Caco-2 (cell line): ENCODE measurements at regions of chr19 and their contacts with region 1.

Region 1: DNA sequence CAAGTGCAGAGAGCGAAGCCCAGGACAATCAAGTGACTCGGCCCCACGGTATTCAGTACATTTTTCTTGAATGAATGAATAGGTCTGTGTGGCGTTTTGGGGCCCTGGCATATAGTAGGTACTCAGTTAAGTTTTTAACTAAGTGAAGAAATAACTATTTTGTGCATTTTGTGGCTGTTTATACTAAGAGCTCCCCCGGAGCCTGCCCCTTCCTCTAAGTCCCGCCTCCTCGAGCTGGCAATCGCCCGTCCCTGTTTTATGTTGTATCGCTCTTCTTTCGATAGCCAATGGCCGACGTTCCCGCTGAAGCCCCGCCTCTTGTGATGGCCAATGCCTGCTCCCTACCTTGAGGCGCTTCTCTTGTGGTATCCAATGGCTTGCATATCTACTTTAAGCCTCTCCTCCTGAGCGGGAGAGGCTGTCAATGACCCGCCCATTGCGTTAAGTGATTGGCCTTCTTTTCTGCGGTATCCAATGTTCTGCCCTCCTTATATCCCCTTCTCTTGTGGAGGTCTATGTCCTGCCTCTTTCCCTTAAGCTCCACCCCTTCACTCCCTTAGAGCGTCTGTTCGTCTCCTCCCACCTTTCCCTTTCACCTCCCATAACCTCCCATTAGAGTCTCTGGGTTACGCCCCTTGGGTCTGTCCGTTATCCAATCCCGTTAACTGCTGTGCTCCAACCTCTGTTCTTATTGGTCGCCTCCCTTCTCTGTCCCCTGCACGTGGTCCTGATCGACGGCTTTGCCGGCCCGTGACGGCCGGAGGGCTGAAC is 509 bp upstream of the HDGFL2 start:
- DNase-seq: peak; percentile 97 to 99
- H3K4me3 ChIP-seq: peak overlapping the region; percentile 53
- H3K4me3 Mint-ChIP-seq: no peak overlapping the region
- H3K27ac Mint-ChIP-seq: no peak overlapping the region
- H3K4me1 ChIP-seq: peaks cover 4% of the 10 kb centered on the region; the same call in 1 of the 2 replicates
- H3K4me1 Mint-ChIP-seq: peaks cover 6% of the 10 kb centered on the region
- H3K27me3 ChIP-seq: no peaks in the 10 kb centered on the region
- H3K27me3 Mint-ChIP-seq: no peaks in the 10 kb centered on the region
- CTCF ChIP-seq: no peak

Region 2: GRCh38 chr19:4360641-4361151 is 110.9 kb before region 1 on chr19:
- CTCF ChIA-PET with region 1: no interaction called
- POLR2A ChIA-PET with region 1: no interaction called
- intact Hi-C with region 1: no loop called
- DNase-seq: no peak
- H3K4me3 ChIP-seq: no peak overlapping the region
- H3K4me3 Mint-ChIP-seq: no peak overlapping the region
- H3K27ac Mint-ChIP-seq: peak overlapping the region; percentile 42
- H3K4me1 ChIP-seq: 0 out of 2 replicates have a peak, but pooled peaks cover 4% of the 10 kb centered on the region
- H3K4me1 Mint-ChIP-seq: no peaks in the 10 kb centered on the region
- H3K27me3 ChIP-seq: no peaks in the 10 kb centered on the region
- H3K27me3 Mint-ChIP-seq: no peaks in the 10 kb centered on the region
- CTCF ChIP-seq: no peak

Region 3: GRCh38 chr19:4431808-4432674 is 39.5 kb before region 1 on chr19:
- CTCF ChIA-PET with region 1: no interaction called
- POLR2A ChIA-PET with region 1: no interaction called
- intact Hi-C with region 1: no loop called
- DNase-seq: no peak
- H3K4me3 ChIP-seq: no peak overlapping the region
- H3K4me3 Mint-ChIP-seq: no peak overlapping the region
- H3K27ac Mint-ChIP-seq: no peak overlapping the region
- H3K4me1 ChIP-seq: no peaks in the 10 kb centered on the region
- H3K4me1 Mint-ChIP-seq: no peaks in the 10 kb centered on the region
- H3K27me3 ChIP-seq: no peaks in the 10 kb centered on the region
- H3K27me3 Mint-ChIP-seq: no peaks in the 10 kb centered on the region
- CTCF ChIP-seq: no peak

Region 4: GRCh38 chr19:4457654-4458395 is 13.8 kb before region 1 on chr19 and contains the start of gene UBXN6:
- CTCF ChIA-PET with region 1: interaction called, 4 read pairs
- POLR2A ChIA-PET with region 1: interaction called, 6 read pairs
- intact Hi-C with region 1: loop called (anchors 1 kb)
- DNase-seq: peak; percentile 96 to 98
- H3K4me3 ChIP-seq: peak within 1 kb of the TSS; percentile 76
- H3K4me3 Mint-ChIP-seq: peak within 1 kb of the TSS; percentile 85
- H3K27ac Mint-ChIP-seq: peak within 1 kb of the TSS; percentile 70
- H3K4me1 ChIP-seq: 0 out of 2 replicates have a peak, but pooled peaks cover 4% of the 10 kb centered on the region
- H3K4me1 Mint-ChIP-seq: peaks cover 10% of the 10 kb centered on the region
- H3K27me3 ChIP-seq: no peaks in the 10 kb centered on the region
- H3K27me3 Mint-ChIP-seq: no peaks in the 10 kb centered on the region
- CTCF ChIP-seq: no peak
- total RNA-seq, gene UBXN6: 42.1 and 42.9 TPM in 2 replicates

Region 5: DNA sequence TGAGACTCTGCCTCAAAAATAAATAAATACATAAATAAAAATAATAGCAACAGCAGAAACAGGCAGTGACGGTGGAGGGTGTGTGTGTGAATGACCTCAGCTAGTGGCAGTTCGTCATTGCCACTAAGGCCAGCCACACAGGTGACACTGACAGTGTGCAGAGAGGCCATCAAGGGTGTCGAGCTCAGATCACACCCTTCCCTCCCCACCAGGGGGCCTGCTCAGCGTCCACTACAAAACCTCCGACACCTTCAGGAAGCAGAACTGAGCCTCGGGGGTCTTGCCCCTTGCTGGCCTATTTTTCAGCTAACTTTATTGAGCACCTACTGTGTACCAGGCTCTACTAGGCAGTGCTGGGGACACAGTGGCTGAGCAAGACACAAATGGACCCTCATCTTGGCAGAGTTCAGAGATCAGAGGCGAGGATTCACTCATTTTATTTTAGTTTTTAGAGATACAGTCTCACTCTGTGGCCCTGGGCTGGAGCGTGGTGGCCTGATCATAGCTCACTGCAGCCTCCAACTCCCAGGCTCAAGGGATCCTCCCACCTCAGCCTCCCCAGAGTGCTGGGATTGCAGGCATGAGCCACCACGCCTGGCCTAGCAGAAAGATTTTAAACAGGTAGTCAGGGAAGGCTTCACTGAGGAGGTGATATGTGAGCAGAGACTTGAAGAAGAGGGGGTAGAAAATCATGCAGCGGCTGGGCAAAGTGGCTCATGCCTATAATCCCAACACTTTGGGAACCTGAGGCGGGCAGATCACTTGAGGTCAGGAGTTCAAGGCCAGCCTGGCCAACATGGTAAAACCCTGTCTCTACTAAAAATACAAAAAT is 118.2 kb after region 1 on chr19:
- CTCF ChIA-PET with region 1: no interaction called
- POLR2A ChIA-PET with region 1: no interaction called
- intact Hi-C with region 1: no loop called
- DNase-seq: peak; percentile 64 to 66
- H3K4me3 ChIP-seq: no peak overlapping the region
- H3K4me3 Mint-ChIP-seq: no peak overlapping the region
- H3K27ac Mint-ChIP-seq: no peak overlapping the region
- H3K4me1 ChIP-seq: no peaks in the 10 kb centered on the region
- H3K4me1 Mint-ChIP-seq: no peaks in the 10 kb centered on the region
- H3K27me3 ChIP-seq: no peaks in the 10 kb centered on the region
- H3K27me3 Mint-ChIP-seq: peaks cover 7% of the 10 kb centered on the region
- CTCF ChIP-seq: peak; percentile 60 to 70